ENCODE measurements at regions of chr20 and their contacts with region 1.

Region 1: GRCh38 chr20:38113401-38114325 is 51.4 kb downstream of the TGM2 start:
- DNase-seq: no peak
- H3K4me3 ChIP-seq: no peak overlapping the region
- H3K27ac ChIP-seq: no peak overlapping the region
- H3K4me1 ChIP-seq: peaks cover 40% of the 10 kb centered on the region
- H3K27me3 ChIP-seq: no peaks in the 10 kb centered on the region
- CTCF ChIP-seq: peak in 1 of 2 donors; percentile 27

Region 2: GRCh38 chr20:38209054-38209675 is 95.5 kb after region 1 on chr20:
- CTCF ChIA-PET with region 1: no interaction called
- dilution Hi-C with region 1: loop called (anchors 5 kb)
- in situ Hi-C with region 1: no loop called
- intact Hi-C with region 1: no loop called
- DNase-seq: no peak
- H3K4me3 ChIP-seq: no peak overlapping the region
- H3K27ac ChIP-seq: no peak overlapping the region
- H3K4me1 ChIP-seq: peaks cover 22% of the 10 kb centered on the region
- H3K27me3 ChIP-seq: no peaks in the 10 kb centered on the region
- CTCF ChIP-seq: no peak

Region 3: GRCh38 chr20:38377039-38377710 is 263.5 kb after region 1 on chr20:
- CTCF ChIA-PET with region 1: interaction called, 16 read pairs
- dilution Hi-C with region 1: no loop called
- in situ Hi-C with region 1: no loop called
- intact Hi-C with region 1: no loop called
- DNase-seq: peak; percentile 26
- H3K4me3 ChIP-seq: no peak overlapping the region
- H3K27ac ChIP-seq: no peak overlapping the region
- H3K4me1 ChIP-seq: no peaks in the 10 kb centered on the region
- H3K27me3 ChIP-seq: no peaks in the 10 kb centered on the region
- CTCF ChIP-seq: no peak

Measured in mammary epithelial cell (primary cell).